ENCODE measurements at regions of chr5 and their contacts with region 1.

Region 1: DNA sequence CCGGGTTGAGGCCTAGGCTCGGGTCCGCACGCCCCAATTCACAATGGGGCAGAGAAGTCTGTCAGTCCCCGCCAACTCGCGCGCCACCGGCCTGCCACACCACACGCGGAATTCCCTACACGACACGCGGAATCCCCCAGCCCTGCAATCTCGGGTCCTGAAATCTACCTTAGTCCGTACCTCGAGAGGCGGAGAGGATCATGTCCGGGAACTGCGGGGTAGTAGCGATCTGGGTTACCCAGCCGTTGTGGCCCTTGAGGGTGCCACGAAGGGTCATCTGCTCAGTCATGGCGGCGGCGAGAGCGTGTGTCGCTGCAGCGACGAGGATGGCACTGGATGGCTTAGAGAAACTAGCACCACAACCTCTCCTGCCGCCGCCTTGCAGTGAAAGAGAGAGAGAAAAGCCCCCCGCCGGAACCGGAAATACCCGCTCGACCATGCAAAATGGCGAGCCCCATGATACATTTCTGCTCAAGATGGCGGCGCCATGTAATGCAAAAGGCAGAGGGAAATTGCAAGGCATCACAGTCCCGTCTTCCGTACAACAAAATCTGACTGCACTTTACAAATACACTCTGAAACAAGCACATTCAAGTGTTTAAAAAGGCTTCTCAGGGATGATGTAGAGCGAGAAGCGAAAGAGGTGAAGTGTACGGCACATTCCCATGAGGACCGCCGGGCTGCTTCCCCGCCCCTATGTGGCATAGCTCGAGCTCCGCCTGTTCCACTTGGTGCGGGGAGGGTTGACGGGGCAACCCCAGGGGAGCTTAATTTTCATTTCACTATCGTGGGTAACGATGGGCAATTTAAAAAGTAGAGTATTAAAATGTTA is at the start of gene RACK1:
- DNase-seq: peak; percentile 88
- H3K4me3 ChIP-seq: peak within 1 kb of the TSS; percentile 57 to 67
- H3K27ac ChIP-seq: peak within 1 kb of the TSS; percentile 77 to 92
- H3K4me1 ChIP-seq: peaks cover 13% of the 10 kb centered on the region
- H3K27me3 ChIP-seq: no peaks in the 10 kb centered on the region
- CTCF ChIP-seq: no peak
- POLR2A ChIP-seq: peak; percentile 30
- total RNA-seq, gene RACK1: 2,058 to 4,360 TPM

Region 2: DNA sequence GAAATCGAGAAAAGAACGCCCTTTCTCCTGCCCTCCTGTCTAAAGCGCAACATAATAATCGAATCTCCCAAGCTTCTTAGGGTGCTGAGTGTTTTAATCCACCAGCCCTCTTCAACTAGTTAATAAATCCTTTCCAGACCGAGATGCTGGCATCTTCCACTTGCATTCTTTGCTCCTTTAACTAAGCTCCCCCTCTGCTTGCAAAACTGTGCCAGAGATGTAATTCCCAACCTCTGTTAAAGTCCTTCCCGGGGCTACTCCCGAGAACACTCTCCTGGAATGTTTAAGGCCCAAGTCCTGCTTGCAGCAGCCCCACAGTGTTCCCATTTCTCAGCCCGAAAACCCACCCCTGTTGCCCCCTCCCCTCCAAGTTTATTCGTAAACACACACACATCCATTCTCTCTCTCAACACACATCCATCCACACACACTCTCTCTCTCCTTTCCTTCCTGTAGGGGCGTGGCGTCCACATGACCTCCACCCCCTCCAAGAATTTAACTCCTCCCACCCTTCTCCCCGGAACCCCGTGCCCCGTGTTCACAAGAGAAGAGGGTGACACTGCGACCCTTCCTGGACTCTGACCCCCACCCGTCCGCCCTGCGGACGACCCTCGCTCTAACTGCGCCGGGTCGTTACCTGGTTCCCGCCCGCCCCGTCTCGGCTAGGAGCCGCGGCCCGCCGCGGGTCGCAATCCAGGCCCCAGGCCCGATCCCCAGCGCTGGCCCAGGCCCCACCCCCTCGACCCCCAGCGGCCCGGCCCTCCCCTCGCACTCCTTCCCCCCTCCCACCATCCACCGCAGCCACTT is 434.1 kb before region 1 on chr5:
- intact Hi-C with region 1: loop called (anchors 10 kb)
- DNase-seq: peak; percentile 87
- H3K4me3 ChIP-seq: peak overlapping the region; percentile 49 to 71
- H3K27ac ChIP-seq: peak overlapping the region; percentile 99
- H3K4me1 ChIP-seq: peaks cover 28% of the 10 kb centered on the region
- H3K27me3 ChIP-seq: no peaks in the 10 kb centered on the region
- CTCF ChIP-seq: peak in 1 of 4 experiments; percentile 22
- POLR2A ChIP-seq: peak; percentile 65

Region 3: GRCh38 chr5:180976518-180976917 is 267.2 kb before region 1 on chr5:
- intact Hi-C with region 1: no loop called
- DNase-seq: no peak
- H3K4me3 ChIP-seq: no peak overlapping the region
- H3K27ac ChIP-seq: no peak overlapping the region
- H3K4me1 ChIP-seq: no peaks in the 10 kb centered on the region
- H3K27me3 ChIP-seq: no peaks in the 10 kb centered on the region
- CTCF ChIP-seq: no peak
- POLR2A ChIP-seq: no peak

Region 4: GRCh38 chr5:181223058-181223728 is 20.5 kb before region 1 on chr5 and contains the start of gene TRIM41:
- intact Hi-C with region 1: loop called (anchors 2 kb)
- DNase-seq: peak; percentile 95
- H3K4me3 ChIP-seq: peak within 1 kb of the TSS; percentile 84 to 90
- H3K27ac ChIP-seq: peak within 1 kb of the TSS; percentile 98
- H3K4me1 ChIP-seq: no peaks in the 10 kb centered on the region
- H3K27me3 ChIP-seq: no peaks in the 10 kb centered on the region
- CTCF ChIP-seq: no peak
- POLR2A ChIP-seq: peak; percentile 68
- total RNA-seq, gene TRIM41: 16.9 to 28.3 TPM

Measured in prostate gland (tissue), 2 donors.